ENCODE measurements at regions of chr15 and their contacts with region 1.

Region 1: DNA sequence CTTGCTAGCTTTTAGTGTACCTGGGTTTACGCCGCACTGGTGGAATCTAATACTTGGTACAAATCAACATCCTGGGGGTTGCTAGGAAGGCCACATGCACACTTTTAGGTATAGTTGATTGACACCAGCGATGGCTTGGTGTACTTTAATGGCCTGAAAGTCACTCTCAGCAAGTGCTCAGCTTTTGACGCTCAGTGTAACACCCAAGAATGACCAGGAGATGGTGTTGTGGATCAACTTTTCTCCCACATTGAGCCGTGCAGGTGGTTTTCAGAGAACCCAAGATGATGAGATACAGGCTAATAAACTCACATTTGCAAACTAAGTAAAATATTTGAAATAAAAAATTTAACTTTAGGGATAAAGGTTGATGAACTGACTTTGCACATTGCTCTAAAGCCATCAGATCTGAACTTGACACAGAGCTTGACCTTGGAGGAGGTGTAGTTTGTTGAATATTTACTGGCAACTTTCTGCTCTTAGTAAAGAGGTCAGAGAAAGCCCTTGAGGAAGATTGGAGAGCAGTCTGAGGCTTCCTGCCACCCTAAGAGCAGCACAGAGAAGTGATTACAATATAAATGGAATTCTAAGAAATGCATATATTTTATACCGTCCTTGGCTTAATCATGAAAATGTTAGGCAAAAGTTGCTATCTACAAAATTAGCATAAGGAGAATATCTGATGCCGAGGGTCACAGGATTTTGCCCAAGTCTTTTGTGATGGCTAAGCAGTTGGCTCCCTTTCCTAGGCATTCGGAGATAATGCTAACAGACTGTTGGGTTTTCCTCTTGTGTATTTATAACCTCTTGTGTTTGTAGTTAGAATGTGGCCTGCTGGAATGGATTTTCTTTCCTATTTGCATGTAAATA is 143.4 kb upstream of the RASGRP1 start:
- DNase-seq: peak; percentile 53
- H3K4me3 Mint-ChIP-seq: no peak overlapping the region
- H3K27ac Mint-ChIP-seq: no peak overlapping the region
- H3K4me1 Mint-ChIP-seq: no peaks in the 10 kb centered on the region
- H3K27me3 Mint-ChIP-seq: no peaks in the 10 kb centered on the region

Region 2: DNA sequence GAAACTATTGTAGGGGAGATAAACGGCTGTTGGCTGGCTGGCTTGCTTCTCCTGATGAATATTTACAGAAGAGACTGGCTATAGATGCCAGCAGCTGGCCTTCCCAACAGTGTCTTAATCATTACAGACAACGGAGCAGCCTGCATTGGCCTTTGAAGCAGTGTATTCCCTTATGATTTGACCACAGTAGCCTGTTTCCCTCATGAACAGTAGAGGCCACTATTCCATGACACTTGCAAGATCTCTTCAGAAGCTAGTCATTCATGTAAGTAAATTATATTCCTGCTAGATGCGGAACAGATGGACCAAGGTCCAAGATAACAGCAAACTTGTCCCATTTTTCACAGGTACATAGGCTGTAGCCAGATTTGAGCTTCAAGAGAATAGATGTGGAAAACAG is 726.3 kb before region 1 on chr15:
- CTCF ChIA-PET with region 1: no interaction called
- intact Hi-C with region 1: no loop called
- DNase-seq: no peak
- H3K4me3 Mint-ChIP-seq: no peak overlapping the region
- H3K27ac Mint-ChIP-seq: no peak overlapping the region
- H3K4me1 Mint-ChIP-seq: no peaks in the 10 kb centered on the region
- H3K27me3 Mint-ChIP-seq: no peaks in the 10 kb centered on the region

Region 3: DNA sequence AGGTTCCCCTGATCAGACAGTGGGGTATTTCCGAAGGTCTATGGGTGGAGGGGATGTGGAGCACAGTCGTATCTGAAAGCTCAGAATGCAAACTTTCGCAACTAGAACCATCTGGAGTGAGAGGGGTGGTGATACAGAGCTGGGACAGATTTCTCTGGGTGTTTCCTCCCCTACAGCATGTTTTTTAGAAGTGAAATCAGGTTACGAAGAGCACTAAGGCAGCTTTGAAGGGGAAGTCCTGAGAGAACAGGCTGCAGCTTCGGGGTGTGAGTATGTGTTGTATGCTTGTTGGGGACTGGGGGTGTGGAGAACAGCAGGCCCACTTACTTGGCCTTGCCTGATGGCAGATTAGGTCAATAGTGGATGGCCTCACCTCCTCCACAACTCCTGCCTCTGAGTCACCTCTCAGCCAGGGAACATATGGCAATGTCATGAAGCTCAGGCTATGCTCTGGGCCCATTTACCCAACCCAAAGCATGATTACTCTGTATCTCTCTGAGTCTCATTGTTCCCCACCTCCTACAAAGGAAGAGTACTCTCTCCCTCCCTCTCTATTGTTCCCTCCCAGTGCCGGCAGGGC is 36.3 kb before region 1 on chr15:
- CTCF ChIA-PET with region 1: no interaction called
- intact Hi-C with region 1: no loop called
- DNase-seq: peak; percentile 69
- H3K4me3 Mint-ChIP-seq: peak overlapping the region; percentile 54
- H3K27ac Mint-ChIP-seq: peak overlapping the region; percentile 94
- H3K4me1 Mint-ChIP-seq: peaks cover 69% of the 10 kb centered on the region
- H3K27me3 Mint-ChIP-seq: no peaks in the 10 kb centered on the region

Region 4: DNA sequence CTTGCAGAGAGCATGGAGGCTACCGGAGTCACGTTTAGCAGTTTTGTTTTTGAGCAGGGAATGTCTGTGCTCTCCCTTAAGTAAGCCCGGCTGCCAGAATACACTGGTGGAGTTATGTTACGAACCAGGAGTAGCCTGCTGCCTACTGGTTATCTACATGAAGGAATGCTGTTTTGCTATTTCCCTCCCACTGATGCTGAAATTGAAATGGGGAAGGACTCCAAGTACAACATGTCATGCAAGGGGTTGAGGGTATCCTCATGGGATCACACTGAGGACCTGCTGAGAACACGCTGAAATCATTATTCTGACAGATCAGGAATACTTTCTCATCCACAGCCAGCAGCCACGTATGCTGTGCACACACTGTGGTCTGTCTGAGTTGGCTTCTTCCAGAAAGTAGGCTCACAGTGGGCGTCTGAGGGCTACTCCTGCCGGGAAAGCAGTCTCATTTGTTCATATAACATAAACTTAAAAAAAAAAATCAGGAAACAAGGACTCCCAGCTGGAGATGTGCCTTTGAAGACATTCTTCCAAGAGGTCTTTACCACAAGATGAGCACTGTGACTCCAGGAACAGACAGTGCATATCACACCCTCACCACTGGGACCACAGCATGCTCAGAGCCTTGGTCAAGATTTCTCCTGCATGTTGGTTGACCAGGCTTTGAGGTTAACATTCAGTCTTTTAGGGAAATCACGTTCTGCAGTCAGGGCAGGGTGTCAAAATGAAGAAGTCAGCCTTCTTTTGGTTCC is 157.0 kb after region 1 on chr15:
- CTCF ChIA-PET with region 1: interaction called, 3 read pairs
- intact Hi-C with region 1: loop called (anchors 5 kb)
- DNase-seq: no peak
- H3K4me3 Mint-ChIP-seq: no peak overlapping the region
- H3K27ac Mint-ChIP-seq: no peak overlapping the region
- H3K4me1 Mint-ChIP-seq: no peaks in the 10 kb centered on the region
- H3K27me3 Mint-ChIP-seq: peaks cover 17% of the 10 kb centered on the region

Measured in activated naive CD4-positive, alpha-beta T cell treated with anti-CD3 and anti-CD28 coated beads for 36 hours (primary cell).